GM12878 (cell line): ENCODE measurements at regions of chr2 and their contacts with region 1.

Region 1: GRCh38 chr2:96760036-96760985 is at the start of gene CNNM4:
- DNase-seq: peak; percentile 61
- ATAC-seq: peak; percentile 86
- H3K4me3 ChIP-seq: peak within 1 kb of the TSS; percentile 91
- H3K27ac ChIP-seq: peak within 1 kb of the TSS; percentile 67
- H3K4me1 ChIP-seq: peaks cover 9% of the 10 kb centered on the region
- H3K27me3 ChIP-seq: no peaks in the 10 kb centered on the region
- CTCF ChIP-seq: peak in 1 of 3 experiments; percentile 45; a peak in 2 of 6 replicates
- EP300 ChIP-seq: no peak
- POLR2A ChIP-seq: peak; percentile 84
- RAD21 ChIP-seq: no peak
- polyA plus RNA-seq, gene CNNM4: 2.4 to 2.8 TPM

Region 2: DNA sequence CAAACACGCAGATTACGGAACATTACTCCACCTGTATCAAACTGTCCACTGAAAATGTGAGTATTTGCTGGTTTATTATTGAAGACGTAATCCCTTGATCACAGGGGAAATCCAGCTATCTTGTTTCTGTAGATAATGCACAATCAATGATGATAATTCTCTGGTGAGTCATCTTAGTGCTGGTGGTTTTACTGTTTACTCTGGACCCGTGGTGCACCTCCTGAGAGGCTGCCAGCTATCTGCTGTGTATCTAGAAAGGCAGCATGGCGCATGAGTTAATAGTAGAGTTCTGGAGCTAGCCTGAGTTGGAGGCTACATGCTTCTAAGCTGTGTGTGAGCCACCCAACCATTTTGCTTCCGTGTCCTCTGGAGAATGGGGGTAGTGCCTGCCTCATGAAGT is 418.2 kb before region 1 on chr2:
- CTCF ChIA-PET with region 1: no interaction called
- POLR2A ChIA-PET with region 1: no interaction called
- RAD21 ChIA-PET with region 1: no interaction called
- SMC1A ChIA-PET with region 1: no interaction called
- in situ Hi-C with region 1: no loop called
- intact Hi-C with region 1: no loop called
- DNase-seq: no peak
- ATAC-seq: peak; percentile 68
- H3K4me3 ChIP-seq: peak overlapping the region; percentile 35; the same call in 1 of the 2 replicates
- H3K27ac ChIP-seq: peak overlapping the region; percentile 57
- H3K4me1 ChIP-seq: peaks cover 62% of the 10 kb centered on the region
- H3K27me3 ChIP-seq: no peaks in the 10 kb centered on the region
- CTCF ChIP-seq: no peak
- EP300 ChIP-seq: no peak
- POLR2A ChIP-seq: no peak
- RAD21 ChIP-seq: no peak

Region 3: GRCh38 chr2:96536445-96537065 is 223.8 kb before region 1 on chr2 and contains the start of gene ARID5A:
- CTCF ChIA-PET with region 1: interaction called, 3 read pairs
- POLR2A ChIA-PET with region 1: interaction called, 3 read pairs
- RAD21 ChIA-PET with region 1: interaction called, 8 read pairs
- SMC1A ChIA-PET with region 1: interaction called, 5 read pairs
- in situ Hi-C with region 1: no loop called
- intact Hi-C with region 1: loop called (anchors 10 kb)
- DNase-seq: peak; percentile 44
- ATAC-seq: peak; percentile 78
- H3K4me3 ChIP-seq: peak within 1 kb of the TSS; percentile 94
- H3K27ac ChIP-seq: peak within 1 kb of the TSS; percentile 92
- H3K4me1 ChIP-seq: peaks cover 43% of the 10 kb centered on the region
- H3K27me3 ChIP-seq: no peaks in the 10 kb centered on the region
- CTCF ChIP-seq: peak in 1 of 3 experiments; percentile 26; a peak in 1 of 6 replicates
- EP300 ChIP-seq: no peak
- POLR2A ChIP-seq: peak; percentile 90
- RAD21 ChIP-seq: no peak
- polyA plus RNA-seq, gene ARID5A: 0.76 to 3.8 TPM

Region 4: GRCh38 chr2:96739633-96740428 is 20.5 kb before region 1 on chr2 and contains the start of gene LMAN2L:
- CTCF ChIA-PET with region 1: interaction called, 36 read pairs
- POLR2A ChIA-PET with region 1: interaction called, 9 read pairs
- RAD21 ChIA-PET with region 1: interaction called, 6 read pairs
- SMC1A ChIA-PET with region 1: interaction called, 12 read pairs
- in situ Hi-C with region 1: no loop called
- intact Hi-C with region 1: loop called (anchors 1 kb)
- DNase-seq: peak; percentile 86
- ATAC-seq: peak; percentile 100
- H3K4me3 ChIP-seq: peak within 1 kb of the TSS; percentile 84
- H3K27ac ChIP-seq: peak within 1 kb of the TSS; percentile 56
- H3K4me1 ChIP-seq: no peaks in the 10 kb centered on the region
- H3K27me3 ChIP-seq: no peaks in the 10 kb centered on the region
- CTCF ChIP-seq: no peak
- EP300 ChIP-seq: no peak
- POLR2A ChIP-seq: peak; percentile 85
- RAD21 ChIP-seq: no peak
- polyA plus RNA-seq, gene LMAN2L: 12.1 to 15.1 TPM

Region 5: DNA sequence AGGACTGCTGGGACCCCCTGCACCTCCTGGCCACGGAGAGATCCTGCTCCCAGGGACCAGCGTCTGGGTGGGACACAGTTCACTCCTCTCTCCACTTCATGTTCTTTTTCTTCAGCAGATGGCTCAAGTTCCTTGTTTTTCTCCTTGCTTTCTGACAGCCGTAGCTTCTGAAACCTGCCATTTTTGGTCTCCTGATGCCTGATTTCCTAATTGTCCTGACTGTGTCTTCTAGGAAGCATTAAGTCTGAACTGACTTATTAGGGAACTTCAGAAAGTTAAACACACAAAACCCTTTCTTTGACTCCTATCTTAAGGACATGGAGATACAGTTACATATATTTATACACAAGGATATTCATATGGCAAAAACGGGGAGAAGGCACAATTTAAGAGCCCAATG is 23.1 kb after region 1 on chr2:
- CTCF ChIA-PET with region 1: interaction called, 153 read pairs
- POLR2A ChIA-PET with region 1: interaction called, 7 read pairs
- RAD21 ChIA-PET with region 1: interaction called, 5 read pairs
- SMC1A ChIA-PET with region 1: interaction called, 100 read pairs
- in situ Hi-C with region 1: no loop called
- intact Hi-C with region 1: no loop called
- DNase-seq: no peak
- ATAC-seq: no peak
- H3K4me3 ChIP-seq: no peak overlapping the region
- H3K27ac ChIP-seq: no peak overlapping the region
- H3K4me1 ChIP-seq: no peaks in the 10 kb centered on the region
- H3K27me3 ChIP-seq: no peaks in the 10 kb centered on the region
- CTCF ChIP-seq: no peak
- EP300 ChIP-seq: no peak
- POLR2A ChIP-seq: no peak
- RAD21 ChIP-seq: no peak

Region 6: DNA sequence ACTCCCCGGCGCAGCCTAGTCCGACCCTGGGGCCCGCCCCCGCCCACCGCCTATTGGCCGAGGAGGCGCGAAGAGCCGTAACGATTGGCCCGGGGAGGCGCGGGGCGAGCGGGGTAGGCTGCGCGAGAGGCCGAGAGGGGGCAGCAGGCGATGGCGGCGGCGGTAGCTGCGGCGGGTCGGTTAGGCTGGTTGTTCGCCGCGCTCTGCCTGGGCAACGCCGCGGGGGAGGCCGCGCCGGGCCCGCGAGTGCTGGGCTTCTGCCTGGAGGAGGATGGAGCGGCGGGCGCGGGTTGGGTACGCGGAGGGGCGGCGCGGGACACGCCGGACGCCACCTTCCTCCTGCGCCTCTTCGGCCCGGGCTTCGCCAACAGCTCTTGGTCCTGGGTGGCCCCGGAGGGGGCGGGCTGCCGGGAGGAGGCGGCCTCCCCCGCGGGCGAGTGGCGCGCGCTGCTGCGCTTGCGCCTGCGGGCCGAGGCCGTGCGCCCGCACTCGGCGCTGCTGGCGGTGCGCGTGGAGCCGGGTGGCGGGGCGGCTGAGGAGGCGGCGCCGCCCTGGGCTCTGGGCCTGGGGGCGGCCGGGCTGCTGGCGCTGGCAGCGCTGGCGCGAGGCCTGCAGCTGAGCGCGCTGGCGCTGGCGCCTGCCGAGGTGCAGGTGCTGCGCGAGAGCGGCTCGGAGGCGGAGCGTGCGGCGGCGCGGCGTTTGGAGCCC is 56.0 kb after region 1 on chr2 and contains the start of gene CNNM3:
- CTCF ChIA-PET with region 1: interaction called, 10 read pairs
- POLR2A ChIA-PET with region 1: interaction called, 3 read pairs
- RAD21 ChIA-PET with region 1: interaction called, 14 read pairs
- SMC1A ChIA-PET with region 1: interaction called, 4 read pairs
- in situ Hi-C with region 1: no loop called
- intact Hi-C with region 1: no loop called
- DNase-seq: no peak
- ATAC-seq: peak; percentile 97
- H3K4me3 ChIP-seq: peak within 1 kb of the TSS; percentile 96
- H3K27ac ChIP-seq: peak within 1 kb of the TSS; percentile 50
- H3K4me1 ChIP-seq: peaks cover 12% of the 10 kb centered on the region
- H3K27me3 ChIP-seq: no peaks in the 10 kb centered on the region
- CTCF ChIP-seq: peak; percentile 32 to 52 (median 52); a peak in 5 of 6 replicates
- EP300 ChIP-seq: no peak
- POLR2A ChIP-seq: peak; percentile 94
- RAD21 ChIP-seq: no peak
- polyA plus RNA-seq, gene CNNM3: 0.72 to 1.9 TPM